GM12878 (cell line): ENCODE measurements at regions of chr5 and their contacts with region 1.

Region 1: GRCh38 chr5:78899922-78900362 is 85.2 kb downstream of the ARSB start:
- DNase-seq: no peak
- ATAC-seq: peak; percentile 88
- H3K4me3 ChIP-seq: no peak overlapping the region
- H3K27ac ChIP-seq: no peak overlapping the region
- H3K4me1 ChIP-seq: peaks cover 6% of the 10 kb centered on the region
- H3K27me3 ChIP-seq: no peaks in the 10 kb centered on the region
- CTCF ChIP-seq: peak; percentile 65 to 86 (median 77)
- EP300 ChIP-seq: no peak
- POLR2A ChIP-seq: no peak
- RAD21 ChIP-seq: peak; percentile 94

Region 2: GRCh38 chr5:78537821-78538220 is 362.1 kb before region 1 on chr5:
- CTCF ChIA-PET with region 1: interaction called, 19 read pairs
- POLR2A ChIA-PET with region 1: no interaction called
- RAD21 ChIA-PET with region 1: interaction called, 5 read pairs
- SMC1A ChIA-PET with region 1: interaction called, 3 read pairs
- in situ Hi-C with region 1: no loop called
- intact Hi-C with region 1: no loop called
- DNase-seq: no peak
- ATAC-seq: peak; percentile 84
- H3K4me3 ChIP-seq: no peak overlapping the region
- H3K27ac ChIP-seq: no peak overlapping the region
- H3K4me1 ChIP-seq: peaks cover 5% of the 10 kb centered on the region
- H3K27me3 ChIP-seq: no peaks in the 10 kb centered on the region
- CTCF ChIP-seq: peak; percentile 42 to 73 (median 57)
- EP300 ChIP-seq: no peak
- POLR2A ChIP-seq: no peak
- RAD21 ChIP-seq: peak; percentile 83

Region 3: GRCh38 chr5:78886341-78887230 is 13.4 kb before region 1 on chr5:
- CTCF ChIA-PET with region 1: interaction called, 55 read pairs
- POLR2A ChIA-PET with region 1: no interaction called
- RAD21 ChIA-PET with region 1: interaction called, 3 read pairs
- SMC1A ChIA-PET with region 1: interaction called, 17 read pairs
- in situ Hi-C with region 1: no loop called
- intact Hi-C with region 1: no loop called
- DNase-seq: no peak
- ATAC-seq: peak; percentile 25
- H3K4me3 ChIP-seq: no peak overlapping the region
- H3K27ac ChIP-seq: no peak overlapping the region
- H3K4me1 ChIP-seq: peaks cover 21% of the 10 kb centered on the region
- H3K27me3 ChIP-seq: no peaks in the 10 kb centered on the region; a peak in 1 of 4 replicates
- CTCF ChIP-seq: peak; percentile 37 to 52 (median 38); a peak in 5 of 6 replicates
- EP300 ChIP-seq: no peak
- POLR2A ChIP-seq: no peak
- RAD21 ChIP-seq: peak; percentile 51

Region 4: DNA sequence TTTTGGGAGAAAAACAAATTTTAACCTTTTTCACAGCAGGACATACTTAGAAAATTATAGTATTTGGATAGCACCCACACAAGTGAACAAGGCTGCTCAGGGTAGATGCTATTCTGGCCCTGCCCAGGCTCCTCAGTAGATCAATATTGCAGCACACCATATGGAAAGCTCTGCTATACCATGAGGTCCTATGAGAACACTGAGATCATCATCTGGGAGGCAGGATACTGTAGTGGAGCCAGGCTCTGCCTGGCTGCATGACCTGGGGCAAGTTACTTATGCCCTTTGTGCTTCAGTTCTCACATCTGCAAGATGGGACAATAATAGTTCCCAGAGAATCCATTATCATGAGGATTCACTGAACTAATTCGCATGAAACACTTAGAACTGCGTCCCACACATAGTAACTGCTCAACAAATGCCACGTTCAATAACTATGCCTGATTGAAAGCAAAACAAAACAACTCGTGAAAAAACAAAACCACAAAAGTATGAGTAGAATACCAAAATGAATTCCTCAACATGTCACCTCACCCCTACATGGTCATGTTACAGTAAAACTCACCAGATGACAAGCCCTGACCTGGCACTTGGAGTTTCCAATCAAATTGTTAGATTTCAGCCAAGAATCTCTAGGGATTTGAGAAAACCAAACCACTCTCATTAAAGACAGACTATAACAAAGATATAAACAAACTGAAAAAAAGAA is 53.3 kb after region 1 on chr5:
- CTCF ChIA-PET with region 1: interaction called, 268 read pairs
- POLR2A ChIA-PET with region 1: no interaction called
- RAD21 ChIA-PET with region 1: interaction called, 5 read pairs
- SMC1A ChIA-PET with region 1: interaction called, 13 read pairs
- in situ Hi-C with region 1: no loop called
- intact Hi-C with region 1: no loop called
- DNase-seq: no peak
- ATAC-seq: peak; percentile 92
- H3K4me3 ChIP-seq: no peak overlapping the region
- H3K27ac ChIP-seq: peak overlapping the region; percentile 55; the same call in 1 of the 2 replicates
- H3K4me1 ChIP-seq: peaks cover 20% of the 10 kb centered on the region
- H3K27me3 ChIP-seq: no peaks in the 10 kb centered on the region
- CTCF ChIP-seq: no peak
- EP300 ChIP-seq: no peak
- POLR2A ChIP-seq: no peak
- RAD21 ChIP-seq: no peak

Region 5: GRCh38 chr5:78972654-78973428 is 72.9 kb after region 1 on chr5:
- CTCF ChIA-PET with region 1: interaction called, 268 read pairs
- POLR2A ChIA-PET with region 1: interaction called, 8 read pairs
- RAD21 ChIA-PET with region 1: interaction called, 93 read pairs
- SMC1A ChIA-PET with region 1: interaction called, 143 read pairs
- in situ Hi-C with region 1: no loop called
- intact Hi-C with region 1: no loop called
- DNase-seq: no peak
- ATAC-seq: no peak
- H3K4me3 ChIP-seq: no peak overlapping the region
- H3K27ac ChIP-seq: no peak overlapping the region
- H3K4me1 ChIP-seq: peaks cover 4% of the 10 kb centered on the region; the same call in 1 of the 2 replicates
- H3K27me3 ChIP-seq: no peaks in the 10 kb centered on the region
- CTCF ChIP-seq: no peak
- EP300 ChIP-seq: no peak
- POLR2A ChIP-seq: no peak
- RAD21 ChIP-seq: no peak

Region 6: GRCh38 chr5:79464695-79465332 is 564.9 kb after region 1 on chr5:
- CTCF ChIA-PET with region 1: interaction called, 6 read pairs
- POLR2A ChIA-PET with region 1: no interaction called
- RAD21 ChIA-PET with region 1: no interaction called
- SMC1A ChIA-PET with region 1: no interaction called
- in situ Hi-C with region 1: loop called (anchors 10 kb)
- intact Hi-C with region 1: loop called (anchors 10 kb)
- DNase-seq: no peak
- ATAC-seq: peak; percentile 75
- H3K4me3 ChIP-seq: no peak overlapping the region
- H3K27ac ChIP-seq: no peak overlapping the region
- H3K4me1 ChIP-seq: no peaks in the 10 kb centered on the region
- H3K27me3 ChIP-seq: no peaks in the 10 kb centered on the region
- CTCF ChIP-seq: peak; percentile 52 to 72 (median 62); a peak in 5 of 6 replicates
- EP300 ChIP-seq: no peak
- POLR2A ChIP-seq: no peak
- RAD21 ChIP-seq: peak; percentile 87